IMR-90 (cell line): ENCODE measurements at regions of chr11 and their contacts with region 1.

Region 1: GRCh38 chr11:3773180-3773579 is 24.2 kb downstream of the NUP98 start:
- DNase-seq: no peak
- ATAC-seq: no peak
- H3K4me3 ChIP-seq: no peak overlapping the region
- H3K27ac ChIP-seq: no peak overlapping the region
- H3K4me1 ChIP-seq: no peaks in the 10 kb centered on the region
- H3K27me3 ChIP-seq: no peaks in the 10 kb centered on the region
- CTCF ChIP-seq: no peak
- POLR2A ChIP-seq: no peak
- RAD21 ChIP-seq: no peak

Region 2: DNA sequence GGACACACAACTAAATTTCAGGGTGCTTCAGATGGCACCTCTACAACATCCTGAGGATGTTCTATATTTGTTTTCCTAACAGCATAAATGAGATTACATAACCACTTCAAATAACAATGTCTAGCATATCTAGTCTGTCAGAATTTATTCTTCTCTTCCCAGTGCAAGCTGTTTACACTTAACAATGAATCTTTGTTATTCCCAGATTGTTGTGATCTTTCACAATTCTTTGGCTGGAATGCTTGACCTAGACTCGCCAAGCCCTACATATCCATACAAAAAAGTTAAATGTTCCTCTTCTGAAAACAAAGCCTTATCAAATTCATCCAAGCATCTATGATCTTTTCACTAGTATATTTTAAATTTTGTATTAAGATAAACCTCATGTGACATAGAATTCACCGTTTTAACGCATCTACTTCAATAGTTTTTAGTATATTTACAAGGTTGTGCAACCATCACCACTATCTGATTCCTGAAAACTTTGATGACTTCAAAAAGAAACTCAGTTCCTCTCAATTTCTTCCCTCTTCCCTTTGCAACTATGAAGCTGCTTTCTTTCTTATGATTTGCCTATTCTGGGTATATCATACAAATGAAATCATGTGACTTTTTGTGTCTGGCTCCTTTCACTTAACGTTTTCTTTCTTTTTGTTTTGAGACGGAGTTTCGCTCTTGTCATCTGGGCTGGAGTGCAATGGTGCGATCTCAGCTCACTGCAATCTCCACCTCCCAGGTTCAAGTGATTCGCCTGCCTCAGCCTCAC is 40.3 kb before region 1 on chr11:
- CTCF ChIA-PET with region 1: no interaction called
- POLR2A ChIA-PET with region 1: no interaction called
- dilution Hi-C with region 1: no loop called
- in situ Hi-C with region 1: no loop called
- intact Hi-C with region 1: loop called (anchors 5 kb)
- DNase-seq: no peak
- ATAC-seq: no peak
- H3K4me3 ChIP-seq: no peak overlapping the region
- H3K27ac ChIP-seq: no peak overlapping the region
- H3K4me1 ChIP-seq: no peaks in the 10 kb centered on the region
- H3K27me3 ChIP-seq: no peaks in the 10 kb centered on the region
- CTCF ChIP-seq: no peak
- POLR2A ChIP-seq: no peak
- RAD21 ChIP-seq: no peak

Region 3: DNA sequence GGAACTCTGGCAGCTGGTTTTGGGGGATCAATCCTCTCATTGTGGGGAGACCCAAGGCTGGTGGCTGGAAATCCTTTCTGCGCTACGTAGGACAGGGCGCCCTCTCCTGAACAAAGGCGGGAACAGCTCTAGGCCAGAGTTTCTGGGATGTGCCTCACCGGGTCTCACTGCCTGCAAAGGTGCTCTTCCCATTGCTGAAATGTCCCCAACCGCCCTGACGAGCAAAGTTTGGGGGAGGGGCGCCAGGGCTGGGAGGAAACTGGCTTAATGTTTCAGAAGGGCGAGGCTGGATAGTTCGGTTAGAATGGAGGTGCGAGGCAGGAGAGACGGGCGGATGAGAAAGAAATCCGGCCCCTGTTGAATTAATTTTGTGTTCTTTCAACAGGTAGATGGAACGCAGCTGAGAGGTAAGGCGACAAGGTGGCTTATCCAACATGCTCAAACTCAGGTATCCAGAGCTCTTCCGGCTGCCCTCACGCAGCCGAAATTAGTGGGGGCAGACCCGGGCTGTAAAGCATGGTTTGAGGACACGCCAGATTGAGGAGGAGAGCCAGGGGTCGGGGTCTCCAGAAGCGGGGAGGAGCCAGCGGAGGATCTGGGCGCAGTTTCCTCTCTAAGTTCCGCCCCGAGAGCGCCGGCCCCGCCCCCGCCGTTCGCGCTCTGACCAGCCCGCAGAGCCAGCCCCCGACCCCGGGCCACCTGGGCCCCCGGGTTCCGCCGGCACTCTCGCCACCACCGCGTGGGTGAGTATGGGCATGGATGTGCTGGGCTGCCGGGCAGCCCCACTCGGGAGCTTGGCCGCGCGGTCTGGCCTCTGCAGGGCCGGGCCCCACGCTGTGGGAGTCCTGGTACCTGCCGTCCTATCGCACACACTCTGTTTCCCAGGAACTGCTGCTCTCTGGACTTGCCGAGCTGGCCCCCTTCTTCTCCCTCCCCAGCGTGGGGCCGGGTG is 35.0 kb after region 1 on chr11 and contains the start of gene PGAP2:
- CTCF ChIA-PET with region 1: interaction called, 10 read pairs
- POLR2A ChIA-PET with region 1: no interaction called
- dilution Hi-C with region 1: no loop called
- in situ Hi-C with region 1: no loop called
- intact Hi-C with region 1: no loop called
- DNase-seq: peak; percentile 35
- ATAC-seq: peak; percentile 89
- H3K4me3 ChIP-seq: peak within 1 kb of the TSS; percentile 78
- H3K27ac ChIP-seq: peak within 1 kb of the TSS; percentile 39
- H3K4me1 ChIP-seq: no peaks in the 10 kb centered on the region
- H3K27me3 ChIP-seq: no peaks in the 10 kb centered on the region
- CTCF ChIP-seq: peak; percentile 69
- POLR2A ChIP-seq: no peak
- RAD21 ChIP-seq: peak; percentile 68
- total RNA-seq, gene PGAP2: 10.6 TPM in 2 replicates